Calu3 (cell line): ENCODE measurements at regions of chr20 and their contacts with region 1.

Region 1: GRCh38 chr20:1185790-1186334 is 1.1 kb upstream of the TMEM74B start:
- DNase-seq: peak; percentile 54
- H3K4me3 Mint-ChIP-seq: peak overlapping the region; percentile 51
- H3K27ac Mint-ChIP-seq: no peak overlapping the region
- H3K4me1 Mint-ChIP-seq: no peaks in the 10 kb centered on the region
- H3K27me3 Mint-ChIP-seq: peaks cover 31% of the 10 kb centered on the region
- CTCF ChIP-seq: peak; percentile 52

Region 2: GRCh38 chr20:956330-956951 is 229.4 kb before region 1 on chr20:
- CTCF ChIA-PET with region 1: no interaction called
- intact Hi-C with region 1: loop called (anchors 5 kb)
- DNase-seq: peak; percentile 72
- H3K4me3 Mint-ChIP-seq: no peak overlapping the region
- H3K27ac Mint-ChIP-seq: no peak overlapping the region
- H3K4me1 Mint-ChIP-seq: no peaks in the 10 kb centered on the region
- H3K27me3 Mint-ChIP-seq: peaks cover 95% of the 10 kb centered on the region
- CTCF ChIP-seq: peak; percentile 83

Region 3: DNA sequence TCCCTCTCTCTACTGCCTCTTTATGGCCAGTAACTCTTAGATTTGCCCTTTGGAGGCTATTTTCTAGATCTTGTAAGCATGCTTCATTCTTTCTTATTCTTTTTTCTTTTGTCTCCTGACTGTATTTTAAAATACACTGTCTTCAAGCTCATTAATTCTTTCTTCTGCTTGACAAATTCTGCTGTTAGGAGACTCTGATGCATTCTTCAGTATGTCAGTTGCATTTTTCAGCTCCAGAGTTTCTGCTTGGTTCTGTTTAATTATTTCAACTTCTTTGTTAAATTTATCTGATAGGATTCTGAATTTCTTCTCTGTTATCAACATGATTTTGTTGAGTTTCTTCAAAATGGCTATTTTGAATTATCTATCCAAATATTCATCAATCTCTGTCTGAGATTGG is 168.1 kb after region 1 on chr20:
- CTCF ChIA-PET with region 1: no interaction called
- intact Hi-C with region 1: no loop called
- DNase-seq: no peak
- H3K4me3 Mint-ChIP-seq: no peak overlapping the region
- H3K27ac Mint-ChIP-seq: no peak overlapping the region
- H3K4me1 Mint-ChIP-seq: no peaks in the 10 kb centered on the region
- H3K27me3 Mint-ChIP-seq: no peaks in the 10 kb centered on the region
- CTCF ChIP-seq: no peak